AG04450 (cell line): ENCODE measurements at regions of chr14 and their contacts with region 1.

Region 1: DNA sequence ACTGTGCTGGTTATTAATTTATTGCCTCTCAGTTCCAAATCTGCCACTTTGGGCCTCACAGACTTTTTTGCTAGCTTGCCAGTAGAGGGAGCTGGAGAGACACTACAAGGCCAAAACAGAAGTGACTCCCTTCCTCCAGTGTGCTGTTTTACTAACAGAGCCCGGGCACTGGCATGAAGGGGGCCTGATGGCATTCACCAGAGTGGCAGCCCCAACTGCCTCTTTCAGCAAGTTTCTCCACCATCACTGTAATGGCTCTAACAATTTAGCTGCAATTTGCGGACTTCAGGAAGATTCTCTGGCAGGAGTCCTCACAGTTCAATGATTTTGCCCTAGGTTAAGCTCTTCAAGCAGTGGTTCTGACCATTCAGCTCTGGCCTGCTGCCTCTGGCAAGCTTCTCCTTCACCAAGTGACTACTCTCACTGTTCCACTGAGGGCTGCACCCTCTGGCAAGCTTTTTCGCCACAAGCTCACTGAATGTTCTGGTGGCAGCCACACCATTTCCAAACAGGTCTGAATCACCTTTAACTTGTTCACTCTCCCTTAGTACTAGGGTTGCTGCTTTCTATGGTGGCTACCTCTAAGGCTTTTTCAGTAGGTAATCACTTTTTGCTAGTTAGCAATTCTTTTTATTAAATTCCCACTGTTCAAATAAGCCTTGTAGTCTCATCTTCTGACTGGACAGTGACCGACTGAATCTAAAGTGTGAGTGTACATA is 104.9 kb downstream of the ZC3H14 start:
- DNase-seq: peak; percentile 64
- H3K4me3 ChIP-seq: no peak overlapping the region
- H3K27ac ChIP-seq: no peak overlapping the region
- H3K27me3 ChIP-seq: no peaks in the 10 kb centered on the region
- CTCF ChIP-seq: peak; percentile 97

Region 2: DNA sequence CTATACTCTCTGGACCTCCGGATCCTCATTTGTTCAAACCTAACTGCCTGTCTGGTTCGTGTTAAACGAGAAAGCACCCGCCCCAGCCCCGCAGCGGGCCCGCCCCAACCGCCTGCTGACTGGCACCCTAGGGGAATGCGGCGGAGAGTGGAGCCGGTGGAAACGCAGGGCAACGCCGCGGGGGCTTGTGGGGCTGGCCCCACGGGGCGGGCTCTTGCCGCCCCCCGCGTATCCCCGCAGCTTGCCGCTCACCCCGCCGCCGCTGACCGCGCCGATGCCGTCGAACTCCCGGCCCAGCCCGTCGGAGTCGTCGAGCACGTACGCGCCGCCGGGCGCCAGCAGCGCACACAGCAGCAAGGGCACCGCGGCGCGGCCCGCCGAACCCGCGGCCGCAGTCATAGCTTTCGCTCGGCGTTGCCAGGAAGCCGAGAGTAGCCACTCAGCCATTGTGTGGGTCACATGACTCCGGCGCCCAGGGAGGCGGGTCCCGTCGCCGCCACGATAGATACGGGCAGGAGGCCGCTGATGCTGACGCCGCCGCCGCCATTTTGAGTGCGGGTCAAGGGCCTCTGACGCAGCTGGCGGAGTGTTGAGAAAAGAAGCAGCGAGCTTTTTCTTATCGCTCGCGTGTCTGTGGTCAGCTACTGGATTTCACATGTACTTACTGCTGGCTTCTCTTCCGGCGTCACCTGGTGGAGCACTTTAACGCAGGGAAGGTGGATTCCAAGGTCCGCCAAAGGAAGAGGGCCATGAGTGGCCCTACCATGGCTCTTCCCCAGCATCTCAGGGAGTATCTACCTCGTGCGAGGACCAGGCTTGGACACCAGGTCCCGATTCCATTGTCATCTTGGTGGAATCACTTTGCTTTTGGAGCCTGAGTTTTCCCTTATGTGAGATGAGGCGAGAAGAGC is 674.7 kb before region 1 on chr14 and contains the start of gene GALC:
- CTCF ChIA-PET with region 1: no interaction called
- POLR2A ChIA-PET with region 1: no interaction called
- DNase-seq: peak; percentile 73
- H3K4me3 ChIP-seq: peak within 1 kb of the TSS; percentile 69
- H3K27ac ChIP-seq: peak within 1 kb of the TSS; percentile 95
- H3K27me3 ChIP-seq: no peaks in the 10 kb centered on the region
- CTCF ChIP-seq: no peak
- polyA plus RNA-seq, gene GALC: 13.0 and 18.2 TPM in 2 replicates

Region 3: DNA sequence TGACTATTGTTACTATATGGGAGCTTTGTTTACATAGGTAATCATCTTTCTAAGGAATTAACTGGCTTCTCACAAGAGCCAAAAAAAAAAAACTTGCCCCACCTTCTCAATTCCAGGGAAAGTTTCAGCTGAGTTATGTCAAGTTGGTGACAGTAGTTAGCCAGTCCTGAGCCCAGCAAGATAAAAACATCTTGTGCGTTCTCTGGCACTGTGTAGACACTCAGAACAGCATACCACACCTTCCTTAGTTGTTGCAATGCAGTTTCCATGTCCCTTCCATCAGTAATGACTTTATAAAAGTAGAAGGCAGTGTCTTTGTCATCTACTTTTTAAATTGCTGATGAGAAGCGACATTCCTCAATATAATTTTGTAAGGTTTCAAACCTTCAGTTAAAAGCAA is 163.1 kb before region 1 on chr14:
- CTCF ChIA-PET with region 1: no interaction called
- POLR2A ChIA-PET with region 1: no interaction called
- DNase-seq: no peak
- H3K4me3 ChIP-seq: no peak overlapping the region
- H3K27ac ChIP-seq: no peak overlapping the region
- H3K27me3 ChIP-seq: no peaks in the 10 kb centered on the region
- CTCF ChIP-seq: no peak

Region 4: GRCh38 chr14:88639221-88639620 is 28.5 kb before region 1 on chr14:
- CTCF ChIA-PET with region 1: interaction called, 14 read pairs
- POLR2A ChIA-PET with region 1: no interaction called
- DNase-seq: no peak
- H3K4me3 ChIP-seq: no peak overlapping the region
- H3K27ac ChIP-seq: no peak overlapping the region
- H3K27me3 ChIP-seq: no peaks in the 10 kb centered on the region
- CTCF ChIP-seq: no peak

Region 5: GRCh38 chr14:88688386-88688785 is 20.7 kb after region 1 on chr14:
- CTCF ChIA-PET with region 1: interaction called, 24 read pairs
- POLR2A ChIA-PET with region 1: no interaction called
- DNase-seq: no peak
- H3K4me3 ChIP-seq: no peak overlapping the region
- H3K27ac ChIP-seq: no peak overlapping the region
- H3K27me3 ChIP-seq: no peaks in the 10 kb centered on the region
- CTCF ChIP-seq: no peak

Region 6: GRCh38 chr14:88824314-88825077 is 156.8 kb after region 1 on chr14 and contains the start of gene TTC8:
- CTCF ChIA-PET with region 1: interaction called, 11 read pairs
- POLR2A ChIA-PET with region 1: no interaction called
- DNase-seq: peak; percentile 70
- H3K4me3 ChIP-seq: peak within 1 kb of the TSS; percentile 82
- H3K27ac ChIP-seq: peak within 1 kb of the TSS; percentile 80
- H3K27me3 ChIP-seq: no peaks in the 10 kb centered on the region
- CTCF ChIP-seq: no peak
- polyA plus RNA-seq, gene TTC8: 70.7 and 83.4 TPM in 2 replicates

Region 7: GRCh38 chr14:89000007-89000942 is 332.6 kb after region 1 on chr14:
- CTCF ChIA-PET with region 1: interaction called, 10 read pairs
- POLR2A ChIA-PET with region 1: interaction called, 4 read pairs
- DNase-seq: peak; percentile 88
- H3K4me3 ChIP-seq: no peak overlapping the region
- H3K27ac ChIP-seq: peak overlapping the region; percentile 66
- H3K27me3 ChIP-seq: no peaks in the 10 kb centered on the region
- CTCF ChIP-seq: no peak

Region 8: GRCh38 chr14:89027097-89027740 is 359.5 kb after region 1 on chr14:
- CTCF ChIA-PET with region 1: interaction called, 13 read pairs
- POLR2A ChIA-PET with region 1: no interaction called
- DNase-seq: no peak
- H3K4me3 ChIP-seq: peak overlapping the region; percentile 71
- H3K27ac ChIP-seq: no peak overlapping the region
- H3K27me3 ChIP-seq: no peaks in the 10 kb centered on the region
- CTCF ChIP-seq: peak; percentile 60